Sigmoid colon (tissue), 7 donors: ENCODE measurements at regions of chr14 and their contacts with region 1.

Region 1: GRCh38 chr14:45426670-45427282 is 173.8 kb upstream of the MIS18BP1 start:
- DNase-seq: no peak
- H3K4me3 ChIP-seq: no peak overlapping the region
- H3K27ac ChIP-seq: no peak overlapping the region
- H3K4me1 ChIP-seq: peaks cover 0 to 17% (median 0%) of the 10 kb centered on the region in 4 donors
- H3K27me3 ChIP-seq: no peaks in the 10 kb centered on the region
- CTCF ChIP-seq: peak; percentile 25 to 63 (median 38)
- EP300 ChIP-seq: no peak
- POLR2A ChIP-seq: no peak

Region 2: DNA sequence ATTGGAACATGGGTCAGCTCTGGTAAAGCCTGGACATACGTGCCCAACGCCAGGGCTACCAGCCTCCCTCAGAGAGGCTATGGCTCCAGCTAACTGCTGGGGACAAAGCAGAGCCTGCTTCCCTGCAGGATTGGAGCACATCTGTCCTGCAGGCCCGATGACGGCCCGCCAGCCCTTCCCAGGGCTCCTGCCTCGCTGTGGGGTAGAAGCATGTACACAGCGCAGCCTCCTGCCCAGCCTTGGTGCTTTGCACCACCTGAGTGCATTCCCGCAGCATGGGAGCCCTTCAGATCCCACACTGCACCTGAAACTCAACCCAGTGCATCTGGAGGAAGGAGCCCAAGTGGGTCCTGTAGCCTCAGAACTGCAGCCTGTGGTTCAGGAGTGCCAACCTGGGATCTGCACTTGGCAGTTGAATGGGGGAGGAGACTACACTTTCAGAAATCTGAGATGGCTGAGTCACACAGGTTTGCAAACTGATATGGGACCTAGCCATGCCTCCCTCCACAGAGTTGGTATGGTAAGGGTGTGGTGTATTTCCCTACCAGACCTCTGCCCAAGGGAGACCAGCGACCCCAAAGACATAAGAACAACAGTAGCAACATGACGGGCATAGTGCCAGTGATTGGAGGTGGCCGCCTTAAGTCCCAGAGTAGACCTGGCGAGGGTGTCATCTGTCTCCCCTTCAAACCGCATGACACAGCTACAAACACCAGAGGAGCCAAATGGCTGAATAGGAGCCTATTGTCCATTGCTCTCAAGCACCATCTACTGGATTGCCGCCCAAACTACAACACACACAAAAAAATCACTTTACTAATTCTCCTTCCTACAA is 100.2 kb after region 1 on chr14:
- intact Hi-C with region 1: loop called (anchors 2 kb)
- DNase-seq: no peak
- H3K4me3 ChIP-seq: no peak overlapping the region
- H3K27ac ChIP-seq: no peak overlapping the region
- H3K4me1 ChIP-seq: no peaks in the 10 kb centered on the region
- H3K27me3 ChIP-seq: no peaks in the 10 kb centered on the region
- CTCF ChIP-seq: peak in 1 of 4 experiments; percentile 34
- EP300 ChIP-seq: no peak
- POLR2A ChIP-seq: no peak

Region 3: GRCh38 chr14:45810152-45810872 is 383.5 kb after region 1 on chr14:
- intact Hi-C with region 1: loop called (anchors 5 kb)
- DNase-seq: no peak
- H3K4me3 ChIP-seq: no peak overlapping the region
- H3K27ac ChIP-seq: peak overlapping the region; percentile 6 to 75 (median 28)
- H3K4me1 ChIP-seq: peaks cover 0 to 46% (median 25%) of the 10 kb centered on the region in 4 donors
- H3K27me3 ChIP-seq: no peaks in the 10 kb centered on the region
- CTCF ChIP-seq: peak in 1 of 4 experiments; percentile 22
- EP300 ChIP-seq: no peak
- POLR2A ChIP-seq: no peak

Region 4: DNA sequence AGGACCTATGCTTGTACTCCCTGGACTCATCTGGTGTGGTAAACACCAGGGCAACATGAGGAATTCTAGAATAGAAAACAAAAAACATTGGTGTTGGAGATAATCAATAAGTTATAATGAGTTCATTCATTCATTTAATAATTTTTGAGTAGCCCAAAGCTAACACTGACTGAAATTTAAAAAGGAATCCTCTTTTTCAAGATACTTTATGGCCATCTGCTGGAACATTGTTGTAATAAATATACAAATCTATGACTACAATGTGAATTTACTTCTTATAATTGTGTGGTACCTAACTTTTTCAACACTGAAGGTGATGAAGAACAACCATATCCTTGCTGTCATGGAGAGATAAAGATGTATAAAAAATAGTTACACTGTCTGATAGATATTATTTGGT is 513.5 kb after region 1 on chr14:
- intact Hi-C with region 1: loop called (anchors 10 kb)
- DNase-seq: no peak
- H3K4me3 ChIP-seq: no peak overlapping the region
- H3K27ac ChIP-seq: no peak overlapping the region
- H3K4me1 ChIP-seq: no peaks in the 10 kb centered on the region
- H3K27me3 ChIP-seq: no peaks in the 10 kb centered on the region
- CTCF ChIP-seq: peak in 1 of 4 experiments; percentile 11
- EP300 ChIP-seq: no peak
- POLR2A ChIP-seq: no peak

Region 5: GRCh38 chr14:46344327-46344937 is 917.7 kb after region 1 on chr14:
- intact Hi-C with region 1: loop called (anchors 5 kb)
- DNase-seq: no peak
- H3K4me3 ChIP-seq: no peak overlapping the region
- H3K27ac ChIP-seq: no peak overlapping the region
- H3K4me1 ChIP-seq: no peaks in the 10 kb centered on the region
- H3K27me3 ChIP-seq: no peaks in the 10 kb centered on the region
- CTCF ChIP-seq: peak in 1 of 4 experiments; percentile 25
- EP300 ChIP-seq: no peak
- POLR2A ChIP-seq: no peak